Adrenal gland (tissue), 19 donors: ENCODE measurements at regions of chr11 and their contacts with region 1.

Region 1: DNA sequence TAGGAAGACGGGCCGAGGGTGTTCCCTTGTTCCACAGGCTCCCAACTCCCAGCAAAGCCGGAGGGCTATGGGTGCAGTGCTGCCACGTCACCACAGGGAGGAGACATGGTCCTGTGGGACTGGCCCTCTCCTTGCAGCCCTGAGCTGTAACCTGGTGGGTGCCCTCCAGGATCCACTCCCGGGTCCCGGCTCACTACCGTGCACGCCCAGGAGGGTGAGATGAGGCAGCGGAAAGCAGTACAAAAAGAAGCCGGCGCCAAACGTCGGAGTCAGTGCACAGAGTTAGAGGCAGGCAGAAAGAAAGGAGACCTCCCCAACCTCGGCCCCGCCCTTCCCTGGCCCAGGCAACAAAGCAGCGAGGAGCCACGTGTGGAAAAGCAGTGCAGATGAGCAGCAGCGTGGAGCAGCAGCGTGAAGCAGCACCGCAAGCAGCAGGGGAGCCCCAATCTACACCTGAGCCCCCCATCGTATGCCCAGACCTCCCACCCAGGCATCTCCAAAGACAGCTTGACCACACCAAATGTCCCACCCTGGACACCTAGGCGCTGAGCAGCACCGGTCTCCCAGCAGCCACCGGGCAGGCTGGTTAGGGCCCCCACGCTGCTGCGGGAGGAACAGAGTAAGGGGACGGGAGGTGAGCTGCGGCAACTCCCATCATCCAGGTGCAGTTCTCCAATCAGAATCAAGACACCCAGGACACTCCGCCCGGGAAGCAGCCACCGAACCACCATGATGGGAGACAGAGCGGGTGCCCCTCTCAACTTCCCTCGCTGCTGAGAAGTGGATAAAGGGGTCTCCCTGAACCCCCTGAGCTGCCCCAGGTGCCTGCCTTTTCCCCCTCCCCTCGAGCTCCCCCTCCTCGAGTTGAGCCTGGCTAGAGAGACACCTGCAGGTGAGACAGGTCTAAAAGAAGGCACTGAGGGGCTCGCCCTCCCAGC is 28.8 kb downstream of the IGSF9B start:
- DNase-seq: peak; percentile 47 to 88 (median 68)
- H3K4me3 ChIP-seq: no peak overlapping the region
- H3K27ac ChIP-seq: no peak overlapping the region
- H3K4me1 ChIP-seq: peaks cover 0 to 8% of the 10 kb centered on the region in 2 donors
- H3K27me3 ChIP-seq: peaks cover 12% of the 10 kb centered on the region
- CTCF ChIP-seq: peak; percentile 52 to 84 (median 73)
- POLR2A ChIP-seq: no peak

Region 2: GRCh38 chr11:132685174-132685611 is 1242.8 kb before region 1 on chr11:
- intact Hi-C with region 1: no loop called
- DNase-seq: peak in 1 of 7 donors; percentile 16
- H3K4me3 ChIP-seq: no peak overlapping the region
- H3K27ac ChIP-seq: no peak overlapping the region
- H3K4me1 ChIP-seq: no peaks in the 10 kb centered on the region
- H3K27me3 ChIP-seq: no peaks in the 10 kb centered on the region
- CTCF ChIP-seq: no peak
- POLR2A ChIP-seq: no peak

Region 3: DNA sequence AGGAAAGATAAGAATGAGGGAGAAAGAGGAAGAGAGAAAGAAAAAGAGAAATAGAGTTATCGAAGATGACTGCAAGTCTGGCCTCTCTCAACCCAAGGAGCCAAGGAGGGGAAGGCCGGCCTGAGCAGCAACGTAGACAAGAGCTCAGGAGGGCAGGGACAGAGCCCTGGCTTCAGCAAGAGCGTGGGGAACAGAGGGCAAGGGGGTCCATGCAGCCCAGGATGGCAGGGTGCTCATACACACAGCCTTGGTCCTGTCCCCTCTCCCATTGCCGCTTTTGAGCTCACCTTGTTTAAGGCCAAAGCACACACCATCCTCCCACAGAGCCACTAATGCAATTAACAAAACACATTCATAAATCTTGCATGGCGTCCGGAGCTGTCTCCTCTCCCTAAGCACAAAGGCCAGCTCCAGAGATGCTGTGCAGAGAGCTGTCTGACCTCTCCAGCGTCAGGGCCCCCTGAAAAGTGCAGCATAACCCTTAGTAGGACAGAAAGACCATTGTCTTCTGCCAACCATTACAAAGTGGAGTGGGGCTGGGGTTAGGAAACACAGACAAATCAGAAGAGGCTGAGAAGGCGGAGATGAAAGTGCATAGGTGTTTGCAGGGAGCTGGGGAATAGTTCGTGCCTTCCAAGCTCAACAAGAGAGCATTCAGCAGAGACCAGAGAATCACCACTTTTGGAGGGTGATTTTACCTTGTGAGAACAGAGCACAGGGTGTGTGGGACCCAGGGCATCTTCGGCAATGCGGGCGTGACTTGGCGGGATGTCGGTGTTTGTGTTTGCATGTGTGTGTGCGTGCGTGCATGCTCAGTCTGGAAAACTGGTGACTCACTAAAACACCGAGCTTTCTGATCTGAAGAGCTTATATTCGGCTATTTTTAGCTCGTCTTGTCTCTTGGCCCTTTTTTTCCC is 112.7 kb after region 1 on chr11:
- intact Hi-C with region 1: loop called in 1 of 2 experiments (anchors 5 kb)
- DNase-seq: peak in 2 of 7 donors; percentile 73 to 78
- H3K4me3 ChIP-seq: no peak overlapping the region
- H3K27ac ChIP-seq: peak overlapping the region in 1 of 5 donors; percentile 66
- H3K4me1 ChIP-seq: peaks cover 0 to 13% of the 10 kb centered on the region in 2 donors
- H3K27me3 ChIP-seq: no peaks in the 10 kb centered on the region
- CTCF ChIP-seq: no peak
- POLR2A ChIP-seq: no peak

Region 4: GRCh38 chr11:134244655-134245054 is 316.7 kb after region 1 on chr11:
- intact Hi-C with region 1: no loop called
- DNase-seq: no peak
- H3K4me3 ChIP-seq: no peak overlapping the region
- H3K27ac ChIP-seq: no peak overlapping the region
- H3K4me1 ChIP-seq: no peaks in the 10 kb centered on the region
- H3K27me3 ChIP-seq: no peaks in the 10 kb centered on the region
- CTCF ChIP-seq: peak; percentile 9 to 51 (median 42)
- POLR2A ChIP-seq: no peak